Calu3 (cell line): ENCODE measurements at regions of chr2 and their contacts with region 1.

Region 1: DNA sequence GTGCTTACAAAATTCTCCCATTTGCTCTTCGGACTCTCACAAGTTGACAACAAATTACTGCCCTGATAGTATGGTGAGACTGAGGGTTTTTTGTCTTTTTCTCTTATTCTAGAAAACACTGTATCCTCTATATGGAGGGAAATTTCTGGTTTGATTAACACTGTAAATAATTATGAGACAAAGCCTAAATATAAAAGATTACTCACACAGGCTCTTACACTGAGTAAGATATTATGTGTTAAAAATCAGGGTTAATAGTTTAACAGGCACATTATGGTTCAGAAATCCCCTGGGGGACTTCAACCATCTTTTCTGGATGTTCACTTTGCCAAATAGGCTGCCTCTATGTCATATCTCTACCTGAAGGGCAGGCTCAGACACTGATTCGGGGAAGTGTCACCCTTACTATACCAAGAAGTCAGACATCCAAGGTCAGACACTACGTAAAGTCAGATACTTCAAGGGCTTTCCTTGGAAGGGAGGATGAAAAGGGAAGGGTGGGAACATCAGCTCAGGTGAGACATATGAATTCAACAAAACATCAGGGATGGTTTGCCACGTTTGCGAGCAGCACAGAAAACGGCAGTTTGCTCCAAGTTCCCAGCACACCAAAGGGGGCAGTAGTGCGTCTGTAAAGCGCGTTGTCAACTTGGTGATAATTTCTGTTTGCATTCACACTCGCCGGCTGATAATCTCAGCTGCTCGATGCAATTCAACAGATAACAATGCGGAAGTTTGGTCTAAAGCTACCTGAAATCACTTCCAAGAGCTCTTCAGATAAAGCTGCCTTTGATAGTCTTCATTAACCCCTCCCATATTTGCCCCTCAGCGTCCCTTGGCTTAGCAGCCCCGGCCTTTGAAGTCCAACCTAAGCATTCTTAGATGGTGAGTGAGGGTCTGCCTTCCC is 972 bp upstream of the RASGRP3 start:
- DNase-seq: peak; percentile 85
- H3K4me3 Mint-ChIP-seq: peak overlapping the region; percentile 93
- H3K27ac Mint-ChIP-seq: peak overlapping the region; percentile 71
- H3K4me1 Mint-ChIP-seq: peaks cover 21% of the 10 kb centered on the region
- H3K27me3 Mint-ChIP-seq: no peaks in the 10 kb centered on the region
- CTCF ChIP-seq: peak; percentile 72

Region 2: GRCh38 chr2:33583194-33583938 is 107.9 kb after region 1 on chr2:
- CTCF ChIA-PET with region 1: interaction called, 8 read pairs
- intact Hi-C with region 1: loop called (anchors 2 kb)
- DNase-seq: peak; percentile 7
- H3K4me3 Mint-ChIP-seq: no peak overlapping the region
- H3K27ac Mint-ChIP-seq: no peak overlapping the region
- H3K4me1 Mint-ChIP-seq: no peaks in the 10 kb centered on the region
- H3K27me3 Mint-ChIP-seq: no peaks in the 10 kb centered on the region
- CTCF ChIP-seq: peak; percentile 47

Region 3: GRCh38 chr2:33599175-33599942 is 123.9 kb after region 1 on chr2 and contains the start of gene FAM98A:
- CTCF ChIA-PET with region 1: interaction called, 4 read pairs
- intact Hi-C with region 1: loop called (anchors 5 kb)
- DNase-seq: peak; percentile 96
- H3K4me3 Mint-ChIP-seq: peak within 1 kb of the TSS; percentile 94
- H3K27ac Mint-ChIP-seq: peak within 1 kb of the TSS; percentile 75
- H3K4me1 Mint-ChIP-seq: peaks cover 9% of the 10 kb centered on the region
- H3K27me3 Mint-ChIP-seq: no peaks in the 10 kb centered on the region
- CTCF ChIP-seq: no peak
- total RNA-seq, gene FAM98A: 47.7 and 62.8 TPM in 2 replicates